Heart right ventricle (tissue), 16 donors: ENCODE measurements at regions of chr20 and their contacts with region 1.

Region 1: DNA sequence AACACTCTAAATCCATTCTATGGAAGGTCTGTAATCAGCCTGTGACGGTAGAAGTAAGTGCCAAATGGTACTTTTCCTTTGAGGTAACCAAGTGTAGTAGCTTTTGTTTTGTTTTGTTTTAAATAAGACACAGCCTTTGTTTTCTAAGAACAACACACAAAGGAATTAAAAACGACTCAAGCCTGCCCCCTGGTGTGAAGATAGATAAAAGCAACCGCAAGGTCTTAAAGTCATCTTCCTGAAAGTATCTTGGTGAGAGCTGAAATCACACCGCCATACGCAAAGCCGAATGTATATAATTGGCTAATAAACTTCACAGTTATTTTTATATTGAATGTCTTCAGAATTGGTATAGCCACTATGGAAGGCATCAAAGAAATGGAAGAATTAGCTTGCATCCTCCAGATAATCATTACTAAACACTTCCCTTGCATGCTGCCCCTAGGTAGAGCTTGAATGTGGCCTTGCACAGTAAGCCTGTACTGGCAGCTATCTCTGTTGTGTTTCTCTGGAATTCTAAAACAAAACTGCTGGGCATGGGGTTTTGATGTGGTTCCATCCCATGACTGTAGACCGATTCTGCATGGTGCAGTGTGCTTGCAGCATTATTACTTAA is 95.6 kb downstream of the LAMP5 start:
- DNase-seq: peak in 1 of 2 donors; percentile 55
- ATAC-seq: no peak
- H3K4me3 ChIP-seq: no peak overlapping the region
- H3K27ac ChIP-seq: no peak overlapping the region
- H3K4me1 ChIP-seq: no peaks in the 10 kb centered on the region
- H3K27me3 ChIP-seq: peaks cover 0 to 26% (median 0%) of the 10 kb centered on the region in 7 donors
- CTCF ChIP-seq: peak; percentile 24 to 82 (median 74)

Region 2: GRCh38 chr20:8749986-8750385 is 860.0 kb before region 1 on chr20:
- intact Hi-C with region 1: loop called in 5 of 10 experiments (anchors 5 to 10 kb)
- DNase-seq: no peak
- ATAC-seq: no peak
- H3K4me3 ChIP-seq: no peak overlapping the region
- H3K27ac ChIP-seq: no peak overlapping the region
- H3K4me1 ChIP-seq: no peaks in the 10 kb centered on the region
- H3K27me3 ChIP-seq: no peaks in the 10 kb centered on the region
- CTCF ChIP-seq: no peak

Region 3: GRCh38 chr20:8756410-8756809 is 853.6 kb before region 1 on chr20:
- intact Hi-C with region 1: loop called in 5 of 10 experiments (anchors 5 to 10 kb)
- DNase-seq: peak in 1 of 2 donors; percentile 5
- ATAC-seq: peak in 4 of 8 donors; percentile 37 to 91 (median 64)
- H3K4me3 ChIP-seq: no peak overlapping the region
- H3K27ac ChIP-seq: no peak overlapping the region
- H3K4me1 ChIP-seq: peaks cover 0 to 11% (median 0%) of the 10 kb centered on the region in 9 donors
- H3K27me3 ChIP-seq: no peaks in the 10 kb centered on the region
- CTCF ChIP-seq: no peak

Region 4: DNA sequence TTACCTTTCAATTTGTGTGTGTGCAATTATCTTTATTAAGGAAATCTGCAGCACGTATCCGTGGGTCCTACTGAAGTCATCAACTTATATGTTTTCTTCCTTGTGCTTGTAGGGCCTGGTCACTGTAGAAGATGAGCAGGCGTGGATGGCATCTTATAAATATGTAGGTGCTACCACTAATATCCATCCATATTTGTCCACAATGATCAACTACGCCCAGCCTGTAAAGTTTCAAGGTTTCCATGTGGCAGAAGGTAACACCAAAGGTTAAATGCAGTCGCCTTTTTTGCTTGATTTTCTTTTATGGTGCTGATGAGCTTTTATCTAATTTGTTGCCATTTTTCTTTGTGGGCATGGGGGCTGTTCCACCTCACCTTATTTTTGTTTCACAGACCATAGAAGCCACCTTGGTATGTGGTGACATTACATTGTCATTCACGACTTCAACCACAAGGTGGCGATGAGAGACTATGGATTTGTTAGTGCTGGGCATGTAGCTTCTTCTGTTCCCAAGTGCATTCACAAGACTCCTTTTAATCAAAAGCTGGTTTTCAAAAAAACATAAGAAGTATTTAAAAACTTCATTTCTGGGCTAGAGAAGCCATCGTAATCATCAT is 202.1 kb before region 1 on chr20:
- intact Hi-C with region 1: loop called (anchors 1 to 5 kb)
- DNase-seq: peak in 1 of 2 donors; percentile 62
- ATAC-seq: peak in 6 of 8 donors; percentile 63 to 83 (median 76)
- H3K4me3 ChIP-seq: no peak overlapping the region
- H3K27ac ChIP-seq: no peak overlapping the region
- H3K4me1 ChIP-seq: peaks cover 0 to 7% (median 0%) of the 10 kb centered on the region in 9 donors
- H3K27me3 ChIP-seq: no peaks in the 10 kb centered on the region
- CTCF ChIP-seq: peak; percentile 68 to 91 (median 84)

Region 5: GRCh38 chr20:9467995-9468394 is 142.0 kb before region 1 on chr20:
- intact Hi-C with region 1: loop called in 2 of 10 experiments (anchors 5 to 10 kb)
- DNase-seq: no peak
- ATAC-seq: no peak
- H3K4me3 ChIP-seq: no peak overlapping the region
- H3K27ac ChIP-seq: no peak overlapping the region
- H3K4me1 ChIP-seq: no peaks in the 10 kb centered on the region
- H3K27me3 ChIP-seq: no peaks in the 10 kb centered on the region
- CTCF ChIP-seq: peak in 7 of 9 donors; percentile 13 to 58 (median 43)

Region 6: GRCh38 chr20:9474835-9475415 is 135.1 kb before region 1 on chr20:
- intact Hi-C with region 1: loop called in 1 of 10 experiments (anchors 10 kb)
- DNase-seq: no peak
- ATAC-seq: no peak
- H3K4me3 ChIP-seq: no peak overlapping the region
- H3K27ac ChIP-seq: no peak overlapping the region
- H3K4me1 ChIP-seq: no peaks in the 10 kb centered on the region
- H3K27me3 ChIP-seq: no peaks in the 10 kb centered on the region
- CTCF ChIP-seq: no peak